ENCODE measurements at regions of chr3 and their contacts with region 1.

Region 1: GRCh38 chr3:33023172-33024136 is 72.0 kb downstream of the CCR4 start:
- DNase-seq: no peak
- H3K4me3 Mint-ChIP-seq: peak overlapping the region; percentile 7
- H3K27ac Mint-ChIP-seq: peak overlapping the region; percentile 90
- H3K4me1 Mint-ChIP-seq: peaks cover 60% of the 10 kb centered on the region
- H3K27me3 Mint-ChIP-seq: no peaks in the 10 kb centered on the region

Region 2: DNA sequence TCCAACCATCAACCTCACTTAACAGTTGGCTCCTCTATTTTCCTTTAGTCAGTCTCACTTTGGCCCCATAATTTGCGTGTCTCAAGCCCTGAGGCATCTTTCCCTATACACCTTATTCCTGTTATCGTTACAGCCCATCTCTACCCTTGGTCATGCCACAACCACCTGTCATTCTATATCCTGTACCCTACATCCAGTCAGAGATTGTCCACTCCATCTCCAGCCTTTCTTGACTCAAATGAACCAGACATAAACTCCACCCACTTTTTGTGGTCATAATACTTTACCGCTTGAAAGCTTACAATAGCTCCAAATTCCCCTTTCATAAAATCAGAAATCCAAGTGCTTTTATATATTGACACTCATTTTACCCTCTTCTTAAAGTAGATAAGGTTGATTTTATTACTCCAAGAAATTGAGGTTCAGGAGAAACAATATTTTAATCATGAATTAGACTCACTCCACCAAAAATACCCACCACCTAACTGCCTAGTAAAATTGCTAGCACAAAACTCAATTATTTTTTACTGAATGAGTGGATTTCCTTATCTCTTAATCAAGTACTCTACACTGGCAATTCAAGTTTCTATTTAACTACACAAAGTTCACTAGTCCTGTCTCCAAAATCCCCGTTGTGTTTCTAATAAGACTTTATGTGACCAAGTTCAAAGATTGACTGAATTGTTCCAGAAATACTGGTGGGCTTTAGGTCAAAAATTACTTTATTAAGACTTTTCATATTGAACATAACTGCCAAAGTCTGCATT is 62.9 kb before region 1 on chr3:
- CTCF ChIA-PET with region 1: interaction called, 5 read pairs
- POLR2A ChIA-PET with region 1: interaction called, 13 read pairs
- intact Hi-C with region 1: loop called (anchors 1 kb)
- DNase-seq: peak; percentile 54
- H3K4me3 Mint-ChIP-seq: peak overlapping the region; percentile 41
- H3K27ac Mint-ChIP-seq: peak overlapping the region; percentile 97
- H3K4me1 Mint-ChIP-seq: peaks cover 84% of the 10 kb centered on the region
- H3K27me3 Mint-ChIP-seq: no peaks in the 10 kb centered on the region

Region 3: DNA sequence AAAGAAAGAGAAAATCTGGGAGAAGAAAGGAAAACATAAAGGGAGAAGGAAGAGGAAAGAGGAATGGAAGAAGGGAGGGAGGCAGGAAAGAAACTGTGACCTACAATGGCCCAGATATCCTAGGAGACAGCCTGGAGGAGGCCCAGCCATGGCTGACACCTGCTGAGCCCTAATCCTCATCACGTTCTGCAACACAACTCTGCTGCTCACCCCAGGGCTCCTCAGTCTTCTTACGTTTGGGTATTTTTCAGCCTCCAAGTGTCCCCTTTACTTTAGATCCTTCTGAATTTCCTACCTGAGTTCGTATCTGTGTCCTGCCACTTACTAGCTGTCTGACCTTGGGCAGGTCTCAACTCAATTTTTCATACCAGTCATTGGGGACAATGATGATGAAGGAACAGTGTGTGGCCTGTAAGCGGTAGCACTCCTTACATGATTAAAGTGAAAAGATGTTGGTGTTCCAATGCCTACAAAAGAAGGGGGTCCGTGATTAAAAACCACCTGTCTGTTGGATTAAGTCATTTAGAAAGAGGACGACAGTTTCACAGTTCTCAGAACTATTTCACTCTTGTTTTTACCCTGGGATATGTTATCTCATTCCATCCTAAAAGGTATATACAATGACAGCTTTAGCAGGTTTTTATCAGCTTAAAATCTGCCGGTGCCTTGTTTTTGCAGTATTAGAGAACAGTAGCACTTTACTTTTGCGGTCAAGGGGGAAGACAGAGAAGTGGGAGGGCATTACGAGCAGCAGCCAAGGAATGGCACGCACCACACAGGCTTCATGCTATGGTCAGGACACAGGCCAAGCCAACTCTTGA is 24.6 kb before region 1 on chr3:
- CTCF ChIA-PET with region 1: interaction called, 7 read pairs
- POLR2A ChIA-PET with region 1: interaction called, 35 read pairs
- intact Hi-C with region 1: loop called (anchors 1 kb)
- DNase-seq: no peak
- H3K4me3 Mint-ChIP-seq: peak overlapping the region; percentile 59
- H3K27ac Mint-ChIP-seq: peak overlapping the region; percentile 86
- H3K4me1 Mint-ChIP-seq: peaks cover 87% of the 10 kb centered on the region
- H3K27me3 Mint-ChIP-seq: no peaks in the 10 kb centered on the region

Region 4: GRCh38 chr3:33047842-33048834 is 24.7 kb after region 1 on chr3:
- CTCF ChIA-PET with region 1: interaction called, 3 read pairs
- POLR2A ChIA-PET with region 1: interaction called, 21 read pairs
- intact Hi-C with region 1: loop called (anchors 1 kb)
- DNase-seq: peak; percentile 73
- H3K4me3 Mint-ChIP-seq: peak overlapping the region; percentile 52
- H3K27ac Mint-ChIP-seq: peak overlapping the region; percentile 96
- H3K4me1 Mint-ChIP-seq: peaks cover 79% of the 10 kb centered on the region
- H3K27me3 Mint-ChIP-seq: no peaks in the 10 kb centered on the region

Region 5: DNA sequence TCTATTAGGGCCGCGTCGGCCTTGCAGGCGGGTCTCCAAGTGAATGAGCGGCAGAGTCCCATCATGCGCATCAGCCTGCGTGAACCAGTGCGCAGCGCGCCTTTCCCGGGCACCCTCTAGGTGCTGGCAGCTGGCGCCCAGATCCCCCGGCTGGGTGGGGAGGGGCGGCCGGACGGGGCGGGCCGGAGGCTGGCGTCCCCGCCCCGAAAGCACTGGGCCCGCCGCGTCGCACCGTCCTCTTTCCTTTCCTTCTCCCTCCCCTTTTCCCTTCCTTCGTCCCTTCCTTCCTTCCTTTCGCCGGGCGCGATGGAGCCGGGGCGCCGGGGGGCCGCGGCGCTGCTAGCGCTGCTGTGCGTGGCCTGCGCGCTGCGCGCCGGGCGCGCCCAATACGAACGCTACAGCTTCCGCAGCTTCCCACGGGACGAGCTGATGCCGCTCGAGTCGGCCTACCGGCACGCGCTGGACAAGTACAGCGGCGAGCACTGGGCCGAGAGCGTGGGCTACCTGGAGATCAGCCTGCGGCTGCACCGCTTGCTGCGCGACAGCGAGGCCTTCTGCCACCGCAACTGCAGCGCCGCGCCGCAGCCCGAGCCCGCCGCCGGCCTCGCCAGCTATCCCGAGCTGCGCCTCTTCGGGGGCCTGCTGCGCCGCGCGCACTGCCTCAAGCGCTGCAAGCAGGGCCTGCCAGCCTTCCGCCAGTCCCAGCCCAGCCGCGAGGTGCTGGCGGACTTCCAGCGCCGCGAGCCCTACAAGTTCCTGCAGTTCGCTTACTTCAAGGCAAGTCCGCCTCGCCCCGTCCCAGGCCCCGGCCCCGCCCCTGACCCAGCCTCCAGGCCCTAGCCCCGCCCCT is 90.5 kb after region 1 on chr3 and contains the start of gene CRTAP:
- CTCF ChIA-PET with region 1: interaction called, 3 read pairs
- POLR2A ChIA-PET with region 1: no interaction called
- intact Hi-C with region 1: loop called (anchors 1 kb)
- DNase-seq: peak; percentile 91
- H3K4me3 Mint-ChIP-seq: peak within 1 kb of the TSS; percentile 80
- H3K27ac Mint-ChIP-seq: peak within 1 kb of the TSS; percentile 73
- H3K4me1 Mint-ChIP-seq: peaks cover 59% of the 10 kb centered on the region
- H3K27me3 Mint-ChIP-seq: no peaks in the 10 kb centered on the region
- total RNA-seq, gene CRTAP: 57.6 to 60.0 TPM